ENCODE measurements at regions of chr11 and their contacts with region 1.

Region 1: GRCh38 chr11:5639953-5640352 is 15.2 kb downstream of the TRIM34 start:
- DNase-seq: no peak
- H3K4me3 Mint-ChIP-seq: no peak overlapping the region
- H3K27ac Mint-ChIP-seq: no peak overlapping the region
- H3K4me1 Mint-ChIP-seq: no peaks in the 10 kb centered on the region
- H3K27me3 Mint-ChIP-seq: no peaks in the 10 kb centered on the region
- CTCF ChIP-seq: no peak

Region 2: GRCh38 chr11:5596607-5597201 is 43.2 kb before region 1 on chr11 and contains the start of gene TRIM6:
- CTCF ChIA-PET with region 1: no interaction called
- POLR2A ChIA-PET with region 1: no interaction called
- intact Hi-C with region 1: loop called (anchors 1 kb)
- DNase-seq: peak; percentile 47
- H3K4me3 Mint-ChIP-seq: peak within 1 kb of the TSS; percentile 76
- H3K27ac Mint-ChIP-seq: no peak within 1 kb of the TSS
- H3K4me1 Mint-ChIP-seq: peaks cover 11% of the 10 kb centered on the region
- H3K27me3 Mint-ChIP-seq: no peaks in the 10 kb centered on the region
- CTCF ChIP-seq: no peak
- total RNA-seq, gene TRIM6: 0.74 and 0.75 TPM in 2 replicates

Measured in MCF 10A (cell line).